ENCODE measurements at regions of chr6 and their contacts with region 1.

Region 1: DNA sequence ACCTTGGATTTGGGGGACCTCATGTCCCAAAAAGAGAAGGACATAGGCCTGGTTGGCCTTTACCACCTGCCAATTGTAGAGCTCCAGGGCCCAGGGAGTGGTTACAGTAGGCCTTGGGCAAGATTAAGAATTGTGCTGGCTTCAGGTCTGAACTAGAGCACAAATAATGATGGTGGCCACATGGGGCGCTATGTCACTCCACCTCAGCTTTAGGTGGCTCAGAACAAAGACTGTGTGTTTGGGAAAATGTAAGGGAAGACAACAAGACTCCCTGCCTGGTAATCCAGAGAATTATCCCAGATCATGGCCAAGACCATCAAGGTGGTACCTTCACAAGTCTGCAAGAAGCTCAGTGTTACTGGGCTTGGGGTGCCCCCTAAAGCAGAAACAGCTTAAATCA is 224.9 kb upstream of the OPRM1 start:
- DNase-seq: peak in 1 of 2 experiments; percentile 76
- H3K4me3 ChIP-seq: no peak overlapping the region
- H3K27ac ChIP-seq: no peak overlapping the region
- H3K4me1 ChIP-seq: no peaks in the 10 kb centered on the region
- H3K27me3 ChIP-seq: no peaks in the 10 kb centered on the region
- CTCF ChIP-seq: peak; percentile 53 to 88 (median 68)
- EP300 ChIP-seq: no peak
- POLR2A ChIP-seq: no peak
- RAD21 ChIP-seq: peak; percentile 61 to 69

Region 2: GRCh38 chr6:153790048-153790447 is 24.1 kb before region 1 on chr6:
- CTCF ChIA-PET with region 1: interaction called, 10 read pairs
- POLR2A ChIA-PET with region 1: no interaction called
- DNase-seq: no peak
- H3K4me3 ChIP-seq: no peak overlapping the region
- H3K27ac ChIP-seq: no peak overlapping the region
- H3K4me1 ChIP-seq: no peaks in the 10 kb centered on the region
- H3K27me3 ChIP-seq: no peaks in the 10 kb centered on the region
- CTCF ChIP-seq: peak; percentile 12 to 25 (median 20); a peak in 3 of 4 replicates
- EP300 ChIP-seq: no peak
- POLR2A ChIP-seq: no peak
- RAD21 ChIP-seq: peak in 1 of 2 experiments; percentile 19; a peak in 1 of 4 replicates

Region 3: GRCh38 chr6:153831350-153832078 is 17.4 kb after region 1 on chr6:
- CTCF ChIA-PET with region 1: interaction called, 29 read pairs
- POLR2A ChIA-PET with region 1: no interaction called
- DNase-seq: peak in 1 of 2 experiments; percentile 38
- H3K4me3 ChIP-seq: no peak overlapping the region
- H3K27ac ChIP-seq: no peak overlapping the region
- H3K4me1 ChIP-seq: peaks cover 3 to 9% (median 5%) of the 10 kb centered on the region in 4 experiments; a peak in 6 of 7 replicates
- H3K27me3 ChIP-seq: no peaks in the 10 kb centered on the region; a peak in 1 of 7 replicates
- CTCF ChIP-seq: peak in 1 of 3 experiments; percentile 19; a peak in 1 of 4 replicates
- EP300 ChIP-seq: no peak
- POLR2A ChIP-seq: no peak
- RAD21 ChIP-seq: no peak

Region 4: DNA sequence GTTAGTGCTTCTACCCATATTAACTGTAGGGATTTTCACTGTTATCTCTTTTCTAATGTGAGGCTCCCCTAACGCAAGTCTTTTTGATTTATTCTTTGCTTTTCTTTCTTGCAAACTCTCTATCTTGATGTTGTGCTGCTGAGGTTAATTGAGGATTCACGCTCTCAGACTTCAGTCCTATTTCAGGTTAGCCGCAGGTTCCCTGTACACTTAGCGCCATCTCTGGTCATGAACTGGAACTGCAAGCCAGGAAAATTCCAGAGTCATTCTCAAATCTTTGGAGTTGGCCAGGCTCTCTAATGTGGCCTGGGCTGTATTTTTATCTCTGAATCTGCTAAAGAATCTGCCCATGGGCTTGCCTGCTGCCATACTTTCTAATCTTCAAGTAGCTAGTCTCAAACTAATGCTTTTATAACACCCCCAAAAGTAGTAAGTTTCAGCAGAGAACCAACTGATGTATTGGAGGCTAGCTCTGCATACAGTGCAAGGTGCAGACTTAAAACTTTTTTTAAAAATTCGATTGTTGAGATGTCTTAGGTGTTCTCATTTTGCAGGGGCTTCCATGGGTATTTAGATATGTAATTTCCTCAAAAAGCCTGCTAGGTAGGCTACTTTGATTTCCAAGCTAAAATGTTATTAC is 133.8 kb after region 1 on chr6:
- CTCF ChIA-PET with region 1: interaction called, 13 read pairs
- POLR2A ChIA-PET with region 1: no interaction called
- DNase-seq: peak; percentile 27 to 69
- H3K4me3 ChIP-seq: no peak overlapping the region
- H3K27ac ChIP-seq: no peak overlapping the region
- H3K4me1 ChIP-seq: peaks cover 0 to 4% (median 4%) of the 10 kb centered on the region in 4 experiments; a peak in 3 of 7 replicates
- H3K27me3 ChIP-seq: no peaks in the 10 kb centered on the region
- CTCF ChIP-seq: peak; percentile 66 to 96 (median 68)
- EP300 ChIP-seq: no peak
- POLR2A ChIP-seq: no peak
- RAD21 ChIP-seq: peak; percentile 90 to 93

Measured in H1 (cell line).